Activated CD8-positive, alpha-beta T cell treated with anti-CD3 and anti-CD28 coated beads, Interleukin-2, amount 10 ng/mL, durations not matched to agents 7 days and 5 days (primary cell): ENCODE measurements at regions of chr6 and their contacts with region 1.

Region 1: DNA sequence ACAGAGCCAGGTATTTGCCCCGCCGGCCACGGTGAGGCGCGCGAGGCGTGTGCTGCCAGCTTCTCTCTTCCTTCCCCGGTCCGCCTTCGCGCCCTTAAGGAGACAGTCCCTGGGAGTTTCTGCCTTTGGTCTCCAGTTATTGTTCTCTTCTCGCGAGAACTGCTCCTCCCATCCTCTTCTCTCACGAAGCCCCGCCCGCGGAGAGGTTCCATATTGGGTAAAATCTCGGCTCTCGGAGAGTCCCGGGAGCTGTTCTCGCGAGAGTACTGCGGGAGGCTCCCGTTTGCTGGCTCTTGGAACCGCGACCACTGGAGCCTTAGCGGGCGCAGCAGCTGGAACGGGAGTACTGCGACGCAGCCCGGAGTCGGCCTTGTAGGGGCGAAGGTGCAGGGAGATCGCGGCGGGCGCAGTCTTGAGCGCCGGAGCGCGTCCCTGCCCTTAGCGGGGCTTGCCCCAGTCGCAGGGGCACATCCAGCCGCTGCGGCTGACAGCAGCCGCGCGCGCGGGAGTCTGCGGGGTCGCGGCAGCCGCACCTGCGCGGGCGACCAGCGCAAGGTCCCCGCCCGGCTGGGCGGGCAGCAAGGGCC is at the start of gene MAPK14:
- DNase-seq: peak; percentile 99
- ATAC-seq: peak; percentile 90
- H3K4me3 Mint-ChIP-seq: peak within 1 kb of the TSS; percentile 85
- H3K27ac Mint-ChIP-seq: peak within 1 kb of the TSS; percentile 91
- H3K4me1 Mint-ChIP-seq: peaks cover 39% of the 10 kb centered on the region
- H3K27me3 Mint-ChIP-seq: peaks cover 18% of the 10 kb centered on the region
- total RNA-seq, gene MAPK14: 59.3 to 59.5 TPM

Region 2: DNA sequence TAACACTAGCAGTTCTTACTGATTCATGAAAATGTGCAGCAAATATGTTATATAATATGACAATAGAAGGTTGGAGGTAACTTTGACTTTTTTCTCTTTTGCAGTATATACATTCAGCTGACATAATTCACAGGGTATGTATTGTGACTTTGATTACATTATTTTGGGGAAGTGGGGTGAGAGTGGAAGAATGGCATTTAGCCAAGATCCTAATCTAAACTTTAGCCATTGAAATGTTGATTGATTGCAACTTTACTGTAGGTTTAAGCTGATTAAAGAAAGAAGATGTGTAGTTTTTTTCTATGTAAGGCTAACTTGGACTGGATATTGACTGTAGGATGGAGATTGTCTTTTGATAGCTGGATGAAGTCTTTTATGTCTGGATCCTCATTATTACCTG is 46.0 kb after region 1 on chr6:
- CTCF ChIA-PET with region 1: interaction called, 18 read pairs
- POLR2A ChIA-PET with region 1: no interaction called
- DNase-seq: no peak
- ATAC-seq: no peak
- H3K4me3 Mint-ChIP-seq: no peak overlapping the region
- H3K27ac Mint-ChIP-seq: no peak overlapping the region
- H3K4me1 Mint-ChIP-seq: no peaks in the 10 kb centered on the region
- H3K27me3 Mint-ChIP-seq: no peaks in the 10 kb centered on the region

Region 3: GRCh38 chr6:36104836-36105235 is 77.2 kb after region 1 on chr6:
- CTCF ChIA-PET with region 1: interaction called, 21 read pairs
- POLR2A ChIA-PET with region 1: interaction called, 6 read pairs
- DNase-seq: no peak
- ATAC-seq: no peak
- H3K4me3 Mint-ChIP-seq: no peak overlapping the region
- H3K27ac Mint-ChIP-seq: no peak overlapping the region
- H3K4me1 Mint-ChIP-seq: peaks cover 35% of the 10 kb centered on the region
- H3K27me3 Mint-ChIP-seq: no peaks in the 10 kb centered on the region

Region 4: DNA sequence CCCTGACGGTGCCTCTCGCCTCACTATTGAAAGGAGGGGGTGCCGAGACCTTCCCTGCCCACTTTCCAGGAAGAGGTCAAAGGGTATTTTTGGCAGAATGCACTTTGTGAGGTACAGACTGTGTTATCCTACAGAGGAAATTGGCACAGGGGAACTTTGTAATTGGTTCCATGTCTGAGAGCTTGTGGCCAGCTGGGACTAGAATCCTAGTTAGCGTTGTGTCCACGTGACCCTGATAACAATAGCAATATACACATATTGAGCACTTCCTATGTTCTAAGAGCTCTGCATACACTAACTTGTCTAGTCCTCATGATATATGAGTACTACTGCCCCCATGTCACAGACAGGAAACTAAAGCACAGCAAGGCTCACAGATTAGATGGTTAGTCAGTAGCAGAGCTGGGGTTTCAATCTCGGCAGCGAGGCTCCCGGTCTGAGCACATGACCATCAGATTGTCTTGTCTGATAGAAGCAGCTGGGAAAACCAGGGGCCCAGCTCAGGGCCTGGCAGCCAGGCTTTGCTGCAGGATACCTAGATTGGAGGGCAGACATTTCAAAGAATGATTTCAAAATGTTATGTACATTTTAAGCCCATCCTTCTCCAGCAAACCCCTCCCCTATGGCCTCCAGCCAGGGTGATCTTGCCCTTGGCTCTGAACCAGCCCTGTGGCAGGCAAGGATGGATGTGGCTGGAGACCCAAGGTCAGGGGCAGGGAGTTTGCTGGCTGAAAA is 104.1 kb after region 1 on chr6:
- CTCF ChIA-PET with region 1: interaction called, 15 read pairs
- POLR2A ChIA-PET with region 1: interaction called, 22 read pairs
- DNase-seq: peak; percentile 69
- ATAC-seq: peak; percentile 73
- H3K4me3 Mint-ChIP-seq: peak overlapping the region; percentile 86
- H3K27ac Mint-ChIP-seq: peak overlapping the region; percentile 93
- H3K4me1 Mint-ChIP-seq: peaks cover 62% of the 10 kb centered on the region
- H3K27me3 Mint-ChIP-seq: no peaks in the 10 kb centered on the region

Region 5: DNA sequence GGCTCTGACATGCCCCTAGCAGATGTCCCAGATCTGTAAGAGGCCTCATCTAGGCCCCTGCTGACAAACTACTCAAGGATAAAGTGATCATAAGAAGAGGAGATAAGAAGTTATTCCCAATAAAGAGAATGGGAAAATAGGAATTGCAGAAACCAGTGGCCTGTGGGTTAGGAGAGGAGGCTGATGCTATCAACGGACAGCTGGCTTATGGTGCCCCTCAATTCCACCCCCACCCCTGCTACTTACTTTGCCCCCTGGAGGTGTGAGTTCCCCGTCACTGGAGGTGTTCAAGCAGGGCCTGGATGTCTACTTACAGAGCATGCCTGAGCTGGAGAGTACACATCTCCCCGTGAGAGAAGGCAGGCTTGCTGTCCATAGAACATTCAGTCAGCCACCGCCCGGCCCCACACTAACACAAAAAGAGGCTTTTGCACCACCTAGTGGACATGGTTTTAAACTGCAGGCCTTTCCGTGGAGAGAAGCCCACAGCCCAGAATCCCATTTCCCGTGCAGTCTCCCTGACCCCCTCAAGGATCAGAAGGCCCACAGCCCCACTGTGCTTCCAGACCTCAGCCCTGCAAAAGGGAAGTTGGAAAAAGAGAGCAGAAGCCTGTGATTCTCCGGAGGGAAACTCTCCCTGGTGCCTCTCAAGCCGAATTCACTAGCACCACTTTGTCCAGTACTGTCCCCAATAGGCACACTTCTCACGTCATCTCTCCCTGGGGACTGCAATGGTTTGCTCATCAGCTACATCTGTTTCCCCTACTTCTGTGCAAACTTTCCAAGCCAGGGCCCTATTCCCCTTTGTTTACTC is 332.9 kb after region 1 on chr6:
- CTCF ChIA-PET with region 1: interaction called, 16 read pairs
- POLR2A ChIA-PET with region 1: no interaction called
- DNase-seq: peak; percentile 83
- ATAC-seq: peak; percentile 89
- H3K4me3 Mint-ChIP-seq: no peak overlapping the region
- H3K27ac Mint-ChIP-seq: no peak overlapping the region
- H3K4me1 Mint-ChIP-seq: peaks cover 18% of the 10 kb centered on the region
- H3K27me3 Mint-ChIP-seq: peaks cover 8% of the 10 kb centered on the region